B cell (primary cell): ENCODE measurements at regions of chr11 and their contacts with region 1.

Region 1: GRCh38 chr11:9972989-9973388 is 309.1 kb downstream of the SWAP70 start:
- DNase-seq: peak; percentile 70
- ATAC-seq: peak; percentile 76
- H3K4me3 ChIP-seq: no peak overlapping the region
- H3K4me3 Mint-ChIP-seq: no peak overlapping the region
- H3K27ac ChIP-seq: no peak overlapping the region
- H3K27ac Mint-ChIP-seq: no peak overlapping the region
- H3K4me1 ChIP-seq: peaks cover 0 to 3% of the 10 kb centered on the region in 2 donors
- H3K4me1 Mint-ChIP-seq: peaks cover 4% of the 10 kb centered on the region
- H3K27me3 ChIP-seq: no peaks in the 10 kb centered on the region
- H3K27me3 Mint-ChIP-seq: no peaks in the 10 kb centered on the region
- CTCF ChIP-seq: peak; percentile 88

Region 2: DNA sequence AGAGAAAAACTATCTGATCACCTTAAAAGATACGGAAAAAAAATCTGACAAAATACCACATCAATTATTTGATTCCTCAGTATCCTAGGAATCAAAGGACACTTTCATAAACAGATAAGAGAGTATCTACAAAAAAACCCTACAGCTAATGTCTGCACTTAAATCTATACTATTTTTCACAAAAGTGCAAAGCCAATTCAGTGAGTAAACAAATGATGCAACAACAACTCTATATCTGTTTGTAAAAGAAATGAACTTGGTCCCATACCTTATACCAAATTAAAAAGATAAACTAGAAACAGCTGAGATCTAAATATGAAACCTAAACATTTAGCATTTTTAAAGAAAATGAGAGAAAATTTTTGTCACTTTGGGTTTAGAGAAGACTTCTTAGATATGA is 45.3 kb before region 1 on chr11:
- CTCF ChIA-PET with region 1: no interaction called
- POLR2A ChIA-PET with region 1: no interaction called
- intact Hi-C with region 1: no loop called
- DNase-seq: no peak
- ATAC-seq: no peak
- H3K4me3 ChIP-seq: no peak overlapping the region
- H3K4me3 Mint-ChIP-seq: no peak overlapping the region
- H3K27ac ChIP-seq: no peak overlapping the region
- H3K27ac Mint-ChIP-seq: no peak overlapping the region
- H3K4me1 ChIP-seq: no peaks in the 10 kb centered on the region
- H3K4me1 Mint-ChIP-seq: peaks cover 2% of the 10 kb centered on the region
- H3K27me3 ChIP-seq: no peaks in the 10 kb centered on the region
- H3K27me3 Mint-ChIP-seq: no peaks in the 10 kb centered on the region
- CTCF ChIP-seq: no peak

Region 3: DNA sequence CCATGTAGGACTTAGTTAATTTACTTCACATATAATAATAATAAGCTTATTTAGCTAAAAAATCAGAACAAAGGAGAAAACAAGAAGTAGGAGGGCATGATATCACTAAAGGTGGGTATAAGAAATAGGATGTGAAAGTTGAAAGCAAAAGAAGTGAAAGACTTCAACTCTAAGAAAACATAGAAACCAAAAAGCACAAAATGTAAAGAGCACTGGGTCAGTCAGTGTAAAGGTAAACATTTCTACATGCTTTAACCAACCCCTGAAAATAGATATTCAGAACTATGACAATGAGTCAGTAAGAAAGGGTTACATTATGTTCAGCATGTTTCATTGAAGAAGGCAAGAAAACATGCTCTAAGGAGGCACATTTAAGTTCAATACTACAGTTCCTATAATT is 10.3 kb before region 1 on chr11:
- CTCF ChIA-PET with region 1: interaction called, 20 read pairs
- POLR2A ChIA-PET with region 1: no interaction called
- intact Hi-C with region 1: no loop called
- DNase-seq: peak; percentile 34
- ATAC-seq: peak; percentile 64
- H3K4me3 ChIP-seq: peak overlapping the region in 1 of 5 experiments; percentile 20
- H3K4me3 Mint-ChIP-seq: peak overlapping the region; percentile 53
- H3K27ac ChIP-seq: peak overlapping the region in 1 of 2 donors; percentile 71
- H3K27ac Mint-ChIP-seq: peak overlapping the region; percentile 84
- H3K4me1 ChIP-seq: peaks cover 5 to 10% of the 10 kb centered on the region in 2 donors
- H3K4me1 Mint-ChIP-seq: peaks cover 13% of the 10 kb centered on the region
- H3K27me3 ChIP-seq: no peaks in the 10 kb centered on the region
- H3K27me3 Mint-ChIP-seq: no peaks in the 10 kb centered on the region
- CTCF ChIP-seq: no peak

Region 4: DNA sequence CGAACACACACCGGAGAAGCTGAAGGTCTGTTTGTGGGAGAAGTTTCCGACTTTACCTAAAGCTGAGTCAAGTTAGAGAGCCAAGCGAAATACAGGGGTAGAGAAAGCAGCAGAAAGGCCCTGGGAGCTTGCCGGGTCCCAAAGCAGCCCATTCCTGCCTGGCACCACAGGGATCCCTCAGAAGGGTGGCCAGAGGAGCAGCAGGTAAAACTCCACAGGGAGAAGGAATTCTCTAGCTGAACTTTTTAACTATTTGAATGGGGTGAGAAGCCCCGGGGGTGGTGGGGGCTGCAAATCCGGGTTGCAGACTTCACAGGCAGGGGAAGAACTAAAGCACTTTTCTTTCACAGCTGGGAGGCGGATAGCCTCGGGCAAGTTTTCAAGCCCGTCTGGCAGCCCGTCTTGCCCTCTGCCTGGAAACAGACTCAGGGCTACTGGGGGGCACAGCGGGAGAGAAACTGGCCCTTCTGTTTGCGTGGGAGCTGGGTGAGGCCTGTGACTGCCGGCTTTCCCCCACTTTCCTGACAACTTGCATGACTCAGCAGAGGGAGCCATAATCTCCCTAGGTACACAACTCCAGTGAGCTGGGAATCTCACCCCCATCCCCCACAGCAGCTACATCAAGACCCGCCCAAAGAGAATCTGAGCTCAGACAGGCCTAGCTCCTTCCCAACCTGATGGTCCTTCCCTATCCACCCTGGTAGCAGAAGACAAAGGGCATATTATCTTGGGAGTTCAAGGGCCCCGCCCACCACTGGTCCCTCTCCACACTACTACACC is 10.0 kb after region 1 on chr11:
- CTCF ChIA-PET with region 1: interaction called, 16 read pairs
- POLR2A ChIA-PET with region 1: no interaction called
- intact Hi-C with region 1: no loop called
- DNase-seq: no peak
- ATAC-seq: no peak
- H3K4me3 ChIP-seq: no peak overlapping the region
- H3K4me3 Mint-ChIP-seq: no peak overlapping the region
- H3K27ac ChIP-seq: no peak overlapping the region
- H3K27ac Mint-ChIP-seq: no peak overlapping the region
- H3K4me1 ChIP-seq: peaks cover 8 to 20% of the 10 kb centered on the region in 2 donors
- H3K4me1 Mint-ChIP-seq: peaks cover 29% of the 10 kb centered on the region
- H3K27me3 ChIP-seq: no peaks in the 10 kb centered on the region
- H3K27me3 Mint-ChIP-seq: no peaks in the 10 kb centered on the region
- CTCF ChIP-seq: no peak

Region 5: GRCh38 chr11:10004526-10005113 is 31.6 kb after region 1 on chr11:
- CTCF ChIA-PET with region 1: no interaction called
- POLR2A ChIA-PET with region 1: no interaction called
- intact Hi-C with region 1: no loop called
- DNase-seq: no peak
- ATAC-seq: no peak
- H3K4me3 ChIP-seq: no peak overlapping the region
- H3K4me3 Mint-ChIP-seq: no peak overlapping the region
- H3K27ac ChIP-seq: no peak overlapping the region
- H3K27ac Mint-ChIP-seq: no peak overlapping the region
- H3K4me1 ChIP-seq: no peaks in the 10 kb centered on the region
- H3K4me1 Mint-ChIP-seq: no peaks in the 10 kb centered on the region
- H3K27me3 ChIP-seq: no peaks in the 10 kb centered on the region
- H3K27me3 Mint-ChIP-seq: no peaks in the 10 kb centered on the region
- CTCF ChIP-seq: no peak

Region 6: DNA sequence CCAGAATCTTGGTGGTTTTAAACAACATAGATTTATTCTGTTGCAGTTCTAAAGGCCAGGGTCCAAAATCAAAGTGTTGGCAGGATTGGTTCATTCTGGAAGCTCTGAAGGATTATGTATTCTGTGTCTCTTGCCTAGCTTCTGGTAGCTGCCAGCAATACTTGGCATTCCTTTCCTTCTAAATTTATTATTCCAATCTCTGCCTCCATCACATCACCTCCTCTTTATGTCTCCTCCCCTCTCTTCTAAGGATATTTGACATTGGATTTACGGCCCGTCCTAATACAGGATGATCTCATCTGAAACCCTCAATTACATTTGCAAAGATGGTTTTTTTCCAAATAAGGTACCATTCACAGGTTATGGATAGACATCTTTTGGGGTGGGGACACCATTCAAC is 134.5 kb after region 1 on chr11:
- CTCF ChIA-PET with region 1: no interaction called
- POLR2A ChIA-PET with region 1: no interaction called
- intact Hi-C with region 1: no loop called
- DNase-seq: no peak
- ATAC-seq: no peak
- H3K4me3 ChIP-seq: no peak overlapping the region
- H3K4me3 Mint-ChIP-seq: no peak overlapping the region
- H3K27ac ChIP-seq: no peak overlapping the region
- H3K27ac Mint-ChIP-seq: no peak overlapping the region
- H3K4me1 ChIP-seq: no peaks in the 10 kb centered on the region
- H3K4me1 Mint-ChIP-seq: no peaks in the 10 kb centered on the region
- H3K27me3 ChIP-seq: no peaks in the 10 kb centered on the region
- H3K27me3 Mint-ChIP-seq: no peaks in the 10 kb centered on the region
- CTCF ChIP-seq: no peak